ENCODE measurements at regions of chr1 and their contacts with region 1.

Region 1: GRCh38 chr1:30379684-30380624 is 343.4 kb downstream of the MATN1 start:
- DNase-seq: peak; percentile 64
- H3K4me3 ChIP-seq: no peak overlapping the region
- H3K27ac ChIP-seq: no peak overlapping the region
- H3K4me1 ChIP-seq: no peaks in the 10 kb centered on the region
- H3K27me3 ChIP-seq: peaks cover 8% of the 10 kb centered on the region
- CTCF ChIP-seq: peak; percentile 52 to 84 (median 71)
- POLR2A ChIP-seq: no peak

Region 2: GRCh38 chr1:30001732-30002039 is 378.3 kb before region 1 on chr1:
- intact Hi-C with region 1: no loop called
- DNase-seq: no peak
- H3K4me3 ChIP-seq: no peak overlapping the region
- H3K27ac ChIP-seq: no peak overlapping the region
- H3K4me1 ChIP-seq: no peaks in the 10 kb centered on the region
- H3K27me3 ChIP-seq: no peaks in the 10 kb centered on the region
- CTCF ChIP-seq: no peak
- POLR2A ChIP-seq: no peak

Region 3: DNA sequence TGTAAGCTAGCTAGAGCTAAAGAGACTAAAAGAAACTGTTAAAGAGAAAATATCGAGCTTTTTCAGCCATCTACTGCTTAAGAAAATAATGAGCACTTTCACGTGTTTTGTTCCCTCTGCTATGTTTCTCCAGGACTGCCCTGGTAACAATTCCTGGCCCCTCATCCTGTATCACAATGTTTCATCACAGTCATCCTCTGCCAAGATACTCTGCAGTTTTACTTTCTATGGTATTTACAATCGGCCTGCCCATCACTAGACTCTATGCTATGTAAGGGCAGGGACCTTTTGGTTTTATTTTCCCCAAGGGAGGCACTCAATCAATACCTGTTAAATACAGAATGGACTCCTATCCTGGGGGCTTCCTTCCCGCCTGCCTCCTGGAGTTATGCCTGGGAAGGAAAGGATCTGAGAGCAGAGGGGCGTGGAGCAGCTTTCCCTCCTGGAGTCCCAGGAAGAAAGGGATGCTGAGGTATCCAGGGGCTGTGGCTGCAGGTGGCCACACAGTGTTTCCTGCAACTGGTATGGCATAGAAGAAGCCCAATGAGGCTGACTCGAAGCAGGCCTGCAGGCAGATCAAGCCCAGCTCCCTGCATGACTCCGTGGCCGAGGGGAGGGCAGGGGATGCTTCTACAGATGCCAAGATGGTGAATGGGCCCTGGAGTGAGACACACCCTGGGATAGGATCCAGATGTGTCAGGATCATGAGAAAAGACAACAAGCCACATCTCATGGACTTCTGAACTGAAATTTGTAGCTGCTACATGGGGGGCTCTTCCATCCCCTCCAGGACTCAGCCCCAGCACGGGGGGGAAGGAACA is 290.5 kb after region 1 on chr1:
- intact Hi-C with region 1: loop called (anchors 10 kb)
- DNase-seq: no peak
- H3K4me3 ChIP-seq: no peak overlapping the region
- H3K27ac ChIP-seq: peak overlapping the region in 1 of 2 donors; percentile 7
- H3K4me1 ChIP-seq: no peaks in the 10 kb centered on the region
- H3K27me3 ChIP-seq: no peaks in the 10 kb centered on the region
- CTCF ChIP-seq: no peak
- POLR2A ChIP-seq: no peak

Region 4: DNA sequence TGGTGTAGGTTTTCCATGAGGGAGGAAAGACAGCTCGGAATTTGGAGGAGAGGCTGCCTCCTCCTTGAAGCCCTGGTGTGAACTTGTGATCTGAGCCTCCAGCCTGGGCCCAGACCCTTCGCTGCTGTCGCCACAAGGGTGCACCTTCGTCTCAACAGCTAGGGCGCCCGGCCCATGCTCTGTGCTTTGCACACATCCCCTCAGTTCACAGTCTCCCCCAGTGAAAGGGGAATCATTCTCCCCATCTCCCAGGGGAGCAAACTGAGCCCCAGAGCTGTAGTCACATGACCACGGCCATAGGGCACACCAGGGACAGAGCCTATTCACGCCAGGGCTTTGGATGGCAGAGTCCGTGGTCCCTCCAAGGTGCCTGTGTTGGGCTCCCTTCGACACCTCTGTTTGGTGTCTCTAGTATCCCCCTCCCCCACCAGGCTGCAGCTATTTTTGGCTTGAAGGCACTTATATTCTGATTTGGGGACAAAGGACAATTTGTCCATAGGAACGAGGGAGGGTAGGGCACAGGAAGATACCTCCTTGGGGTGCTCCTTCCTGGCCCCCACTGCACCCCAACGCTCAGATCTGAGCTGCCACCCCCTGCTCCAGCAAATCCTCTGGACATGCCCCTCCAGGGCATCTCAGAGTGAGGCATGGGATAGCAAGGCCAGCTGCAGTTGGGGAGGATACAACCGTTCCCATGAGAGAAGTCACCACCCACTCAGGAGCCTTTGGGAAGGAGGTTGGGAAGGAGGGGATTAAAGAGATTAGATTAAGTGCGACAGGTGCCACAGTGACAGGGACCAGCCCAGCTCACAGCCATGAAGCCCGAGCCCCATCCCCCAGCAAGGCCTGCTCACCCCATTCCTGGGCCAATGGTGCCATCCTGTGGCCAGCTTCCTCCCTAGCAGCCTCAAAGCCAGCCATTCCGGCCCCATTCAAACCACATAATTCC is 327.7 kb after region 1 on chr1:
- intact Hi-C with region 1: loop called (anchors 10 kb)
- DNase-seq: peak; percentile 67
- H3K4me3 ChIP-seq: no peak overlapping the region
- H3K27ac ChIP-seq: no peak overlapping the region
- H3K4me1 ChIP-seq: no peaks in the 10 kb centered on the region
- H3K27me3 ChIP-seq: no peaks in the 10 kb centered on the region
- CTCF ChIP-seq: peak in 3 of 4 experiments; percentile 79 to 96 (median 95)
- POLR2A ChIP-seq: no peak

Measured in prostate gland (tissue), 2 donors.